Activated CD8-positive, alpha-beta T cell treated with anti-CD3 and anti-CD28 coated beads for 36 hours (primary cell): ENCODE measurements at regions of chr18 and their contacts with region 1.

Region 1: GRCh38 chr18:24543805-24544498 is 83.5 kb downstream of the HRH4 start:
- DNase-seq: no peak
- ATAC-seq: no peak
- H3K4me3 Mint-ChIP-seq: no peak overlapping the region
- H3K27ac Mint-ChIP-seq: no peak overlapping the region
- H3K4me1 Mint-ChIP-seq: no peaks in the 10 kb centered on the region
- H3K27me3 Mint-ChIP-seq: peaks cover 1% of the 10 kb centered on the region
- CTCF ChIP-seq: peak; percentile 22

Region 2: DNA sequence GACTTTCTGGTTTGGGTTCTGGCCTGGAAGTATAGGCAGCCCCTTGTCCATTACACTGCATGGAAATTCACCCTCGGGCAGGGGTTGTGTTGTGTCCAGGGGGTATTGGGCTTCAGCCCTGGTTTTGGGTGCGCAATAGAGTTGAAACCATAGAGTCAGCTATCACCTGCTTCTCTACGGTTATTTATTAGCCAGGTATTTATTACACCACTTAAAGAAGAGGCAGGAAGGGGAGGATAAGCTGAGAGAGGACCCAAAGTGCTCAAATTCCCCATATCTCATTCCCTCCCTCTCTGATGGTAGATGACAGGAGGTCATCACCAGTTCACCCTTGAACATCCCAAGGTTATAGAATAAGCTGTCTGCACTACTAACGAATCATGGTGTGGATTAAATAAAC is 49.9 kb after region 1 on chr18:
- CTCF ChIA-PET with region 1: no interaction called
- POLR2A ChIA-PET with region 1: no interaction called
- intact Hi-C with region 1: loop called (anchors 2 kb)
- DNase-seq: no peak
- ATAC-seq: no peak
- H3K4me3 Mint-ChIP-seq: no peak overlapping the region
- H3K27ac Mint-ChIP-seq: no peak overlapping the region
- H3K4me1 Mint-ChIP-seq: no peaks in the 10 kb centered on the region
- H3K27me3 Mint-ChIP-seq: peaks cover 9% of the 10 kb centered on the region
- CTCF ChIP-seq: no peak